Activated CD4-positive, alpha-beta T cell treated with anti-CD3 and anti-CD28 coated beads, Interleukin-2, amount 10 ng/mL, durations not matched to agents 7 days and 5 days (primary cell): ENCODE measurements at regions of chr12 and their contacts with region 1.

Region 1: GRCh38 chr12:93109551-93110203 is 180.6 kb upstream of the EEA1 start:
- DNase-seq: no peak
- H3K4me3 Mint-ChIP-seq: no peak overlapping the region
- H3K27ac Mint-ChIP-seq: no peak overlapping the region
- H3K4me1 Mint-ChIP-seq: no peaks in the 10 kb centered on the region
- H3K27me3 Mint-ChIP-seq: peaks cover 2% of the 10 kb centered on the region

Region 2: DNA sequence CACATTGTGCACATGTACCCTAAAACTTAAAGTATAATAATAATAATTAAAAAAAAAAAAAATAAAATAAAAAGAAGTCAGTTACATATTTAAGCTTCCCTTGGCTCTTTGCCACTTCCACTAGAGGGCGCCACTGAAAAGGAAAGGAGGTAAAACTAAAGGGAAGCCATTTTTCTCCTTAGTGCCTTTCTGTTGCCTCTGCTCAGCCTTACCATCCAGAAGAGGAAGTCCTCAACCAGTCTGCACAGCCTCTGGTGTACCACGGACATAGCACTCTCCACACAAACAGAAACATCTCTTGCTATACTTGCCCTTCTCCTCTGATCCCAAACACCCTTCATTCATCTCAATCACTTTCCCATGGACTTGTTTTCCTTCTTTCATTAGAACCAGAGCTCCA is 11.6 kb before region 1 on chr12:
- CTCF ChIA-PET with region 1: interaction called, 15 read pairs
- POLR2A ChIA-PET with region 1: no interaction called
- DNase-seq: peak; percentile 80
- H3K4me3 Mint-ChIP-seq: no peak overlapping the region
- H3K27ac Mint-ChIP-seq: peak overlapping the region; percentile 42
- H3K4me1 Mint-ChIP-seq: peaks cover 14% of the 10 kb centered on the region
- H3K27me3 Mint-ChIP-seq: no peaks in the 10 kb centered on the region